ENCODE measurements at regions of chr5 and their contacts with region 1.

Region 1: GRCh38 chr5:14757850-14758249 is 93.3 kb downstream of the OTULIN start:
- DNase-seq: peak; percentile 71
- H3K4me3 ChIP-seq: no peak overlapping the region
- H3K27ac ChIP-seq: peak overlapping the region; percentile 92
- H3K4me1 ChIP-seq: peaks cover 16% of the 10 kb centered on the region
- H3K27me3 ChIP-seq: no peaks in the 10 kb centered on the region
- CTCF ChIP-seq: no peak
- POLR2A ChIP-seq: no peak

Region 2: GRCh38 chr5:14286574-14287421 is 471.1 kb before region 1 on chr5:
- CTCF ChIA-PET with region 1: no interaction called
- POLR2A ChIA-PET with region 1: no interaction called
- dilution Hi-C with region 1: no loop called
- intact Hi-C with region 1: no loop called
- DNase-seq: no peak
- H3K4me3 ChIP-seq: no peak overlapping the region
- H3K27ac ChIP-seq: no peak overlapping the region
- H3K4me1 ChIP-seq: no peaks in the 10 kb centered on the region
- H3K27me3 ChIP-seq: no peaks in the 10 kb centered on the region
- CTCF ChIP-seq: no peak
- POLR2A ChIP-seq: no peak

Region 3: GRCh38 chr5:14739538-14739937 is 18.3 kb before region 1 on chr5:
- CTCF ChIA-PET with region 1: interaction called, 7 read pairs
- POLR2A ChIA-PET with region 1: no interaction called
- dilution Hi-C with region 1: no loop called
- intact Hi-C with region 1: loop called (anchors 2 kb)
- DNase-seq: peak; percentile 79
- H3K4me3 ChIP-seq: no peak overlapping the region
- H3K27ac ChIP-seq: peak overlapping the region; percentile 58
- H3K4me1 ChIP-seq: peaks cover 17% of the 10 kb centered on the region
- H3K27me3 ChIP-seq: no peaks in the 10 kb centered on the region
- CTCF ChIP-seq: no peak
- POLR2A ChIP-seq: no peak

Region 4: DNA sequence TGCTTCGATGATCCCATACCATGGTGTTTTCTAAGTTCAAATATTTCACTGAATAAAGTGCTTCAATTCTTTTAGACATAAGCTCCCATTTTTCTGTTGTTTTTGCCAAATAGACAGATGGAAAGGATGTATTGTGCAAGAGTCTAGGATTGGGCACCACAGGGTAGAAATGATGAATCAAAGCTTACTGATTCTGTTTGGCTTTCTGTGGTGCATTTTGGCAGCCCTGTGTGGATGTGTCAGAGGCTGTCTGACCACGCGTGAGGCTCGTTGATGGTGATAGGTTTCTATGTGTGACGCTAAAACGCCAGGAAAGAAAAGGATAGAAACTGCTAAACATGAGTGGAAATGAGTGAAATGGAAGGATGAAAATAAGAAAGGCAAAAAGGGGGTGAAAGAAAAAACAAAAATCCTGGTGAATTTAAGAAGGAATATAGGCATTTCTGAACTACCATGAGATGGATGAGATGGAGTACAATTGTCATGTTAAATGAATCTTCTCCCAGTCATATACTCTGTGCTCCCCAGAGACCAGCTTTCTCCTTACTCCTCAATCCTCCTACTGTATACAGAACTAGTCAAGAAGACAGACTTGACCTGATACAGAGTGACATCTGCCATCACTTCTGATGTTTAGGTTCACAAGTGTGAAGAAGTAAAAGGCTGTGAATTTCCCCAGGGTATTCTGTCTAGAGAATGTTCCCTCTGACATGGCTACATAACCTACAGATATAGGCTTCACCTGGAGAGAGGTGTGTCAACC is 59.3 kb after region 1 on chr5:
- CTCF ChIA-PET with region 1: interaction called, 3 read pairs
- POLR2A ChIA-PET with region 1: no interaction called
- dilution Hi-C with region 1: no loop called
- intact Hi-C with region 1: loop called (anchors 5 kb)
- DNase-seq: no peak
- H3K4me3 ChIP-seq: no peak overlapping the region
- H3K27ac ChIP-seq: no peak overlapping the region
- H3K4me1 ChIP-seq: peaks cover 11% of the 10 kb centered on the region
- H3K27me3 ChIP-seq: no peaks in the 10 kb centered on the region
- CTCF ChIP-seq: no peak
- POLR2A ChIP-seq: no peak

Region 5: GRCh38 chr5:15346738-15347137 is 588.9 kb after region 1 on chr5:
- CTCF ChIA-PET with region 1: no interaction called
- POLR2A ChIA-PET with region 1: no interaction called
- dilution Hi-C with region 1: no loop called
- intact Hi-C with region 1: no loop called
- DNase-seq: peak; percentile 58
- H3K4me3 ChIP-seq: no peak overlapping the region
- H3K27ac ChIP-seq: no peak overlapping the region
- H3K4me1 ChIP-seq: peaks cover 11% of the 10 kb centered on the region
- H3K27me3 ChIP-seq: peaks cover 2 to 8% of the 10 kb centered on the region in 2 experiments
- CTCF ChIP-seq: no peak
- POLR2A ChIP-seq: no peak

Measured in endothelial cell of umbilical vein (primary cell).